HCT116 (cell line): ENCODE measurements at regions of chr17 and their contacts with region 1.

Region 1: GRCh38 chr17:49997791-49998703 is 3.0 kb upstream of the DLX3 start:
- DNase-seq: peak; percentile 88
- ATAC-seq: peak; percentile 86
- H3K4me3 ChIP-seq: no peak overlapping the region
- H3K27ac ChIP-seq: no peak overlapping the region; the same call in 1 of the 2 replicates
- H3K4me1 ChIP-seq: peaks cover 14 to 30% of the 10 kb centered on the region in 2 experiments
- H3K27me3 ChIP-seq: peaks cover 6% of the 10 kb centered on the region; the same call in 1 of the 2 replicates
- CTCF ChIP-seq: peak; percentile 94 to 99 (median 97)
- POLR2A ChIP-seq: no peak
- RAD21 ChIP-seq: peak; percentile 100

Region 2: GRCh38 chr17:49567871-49568694 is 430.0 kb before region 1 on chr17:
- CTCF ChIA-PET with region 1: interaction called, 86 read pairs
- POLR2A ChIA-PET with region 1: interaction called, 4 read pairs
- RAD21 ChIA-PET with region 1: interaction called, 5 to 6 read pairs
- intact Hi-C with region 1: loop called (anchors 1 kb)
- DNase-seq: peak; percentile 81
- ATAC-seq: peak; percentile 74
- H3K4me3 ChIP-seq: 0 out of 4 replicates have a peak overlapping the region, but pooled peaks of 1 of the 2 experiments have one; percentile 2
- H3K27ac ChIP-seq: no peak overlapping the region
- H3K4me1 ChIP-seq: peaks cover 0 to 17% of the 10 kb centered on the region in 2 experiments; a peak in 3 of 4 replicates
- H3K27me3 ChIP-seq: peaks cover 5% of the 10 kb centered on the region; the same call in 1 of the 2 replicates
- CTCF ChIP-seq: peak; percentile 98 to 99 (median 99)
- POLR2A ChIP-seq: no peak
- RAD21 ChIP-seq: peak; percentile 100

Region 3: DNA sequence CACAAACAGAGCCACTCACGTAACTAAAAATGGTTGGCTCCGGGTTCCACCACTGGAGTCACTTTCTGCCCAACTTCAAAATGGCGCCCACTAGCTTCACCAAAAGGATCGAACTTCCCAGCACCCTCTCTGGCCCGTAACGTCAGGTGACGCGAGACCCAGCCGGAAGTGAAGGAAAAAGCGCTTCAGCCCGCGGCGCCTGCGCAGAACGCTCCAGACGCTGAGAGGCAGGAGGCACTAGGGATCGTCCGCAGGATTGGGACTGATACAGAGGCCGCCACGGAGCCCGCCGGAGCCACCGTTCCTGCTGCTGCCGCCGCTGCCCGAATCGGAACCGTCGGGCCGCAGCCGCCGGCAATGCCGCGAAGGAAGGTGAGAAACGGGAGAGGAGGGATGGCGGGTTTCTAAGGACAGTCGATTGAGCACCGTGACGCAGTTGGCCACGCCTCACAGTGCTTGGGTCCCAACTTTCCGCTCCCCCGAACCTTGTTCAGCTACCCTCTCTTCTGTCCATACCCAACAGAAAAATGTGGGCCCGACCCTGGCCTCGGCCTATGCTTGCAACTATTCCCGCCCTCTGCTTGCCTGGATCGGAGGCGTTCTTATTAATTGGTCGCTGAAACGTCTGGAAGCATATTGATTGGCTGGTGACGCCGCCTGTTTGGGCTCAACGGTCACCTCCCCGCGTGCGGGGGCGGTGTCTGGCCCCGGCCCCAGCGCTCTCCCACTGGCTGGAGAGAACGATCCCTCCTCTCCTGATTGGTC is 209.4 kb before region 1 on chr17 and contains the start of gene KAT7:
- CTCF ChIA-PET with region 1: interaction called, 6 read pairs
- POLR2A ChIA-PET with region 1: interaction called, 4 read pairs
- RAD21 ChIA-PET with region 1: no interaction called
- intact Hi-C with region 1: loop called (anchors 2 kb)
- DNase-seq: peak; percentile 100
- ATAC-seq: peak; percentile 93
- H3K4me3 ChIP-seq: peak within 1 kb of the TSS; percentile 86 to 96
- H3K27ac ChIP-seq: peak within 1 kb of the TSS; percentile 98
- H3K4me1 ChIP-seq: peaks cover 13 to 19% of the 10 kb centered on the region in 2 experiments
- H3K27me3 ChIP-seq: no peaks in the 10 kb centered on the region; the same call in 1 of the 2 replicates
- CTCF ChIP-seq: no peak
- POLR2A ChIP-seq: peak; percentile 82
- RAD21 ChIP-seq: no peak
- total RNA-seq, gene KAT7: 79.5 TPM

Region 4: GRCh38 chr17:49880291-49881053 is 117.6 kb before region 1 on chr17:
- CTCF ChIA-PET with region 1: interaction called, 123 read pairs
- POLR2A ChIA-PET with region 1: no interaction called
- RAD21 ChIA-PET with region 1: interaction called, 10 to 11 read pairs
- intact Hi-C with region 1: loop called (anchors 1 kb)
- DNase-seq: peak; percentile 70
- ATAC-seq: peak; percentile 98
- H3K4me3 ChIP-seq: peak overlapping the region; percentile 39 to 52
- H3K27ac ChIP-seq: no peak overlapping the region; the same call in 1 of the 2 replicates
- H3K4me1 ChIP-seq: peaks cover 5 to 13% of the 10 kb centered on the region in 2 experiments; a peak in 3 of 4 replicates
- H3K27me3 ChIP-seq: no peaks in the 10 kb centered on the region
- CTCF ChIP-seq: peak; percentile 92 to 99 (median 99)
- POLR2A ChIP-seq: no peak
- RAD21 ChIP-seq: peak; percentile 99

Region 5: GRCh38 chr17:49952209-49952911 is 45.7 kb before region 1 on chr17:
- CTCF ChIA-PET with region 1: interaction called, 53 read pairs
- POLR2A ChIA-PET with region 1: interaction called, 5 read pairs
- RAD21 ChIA-PET with region 1: interaction called, 24 to 27 read pairs
- intact Hi-C with region 1: loop called (anchors 1 kb)
- DNase-seq: peak; percentile 76
- ATAC-seq: peak; percentile 97
- H3K4me3 ChIP-seq: no peak overlapping the region
- H3K27ac ChIP-seq: no peak overlapping the region
- H3K4me1 ChIP-seq: peaks cover 20 to 29% of the 10 kb centered on the region in 2 experiments
- H3K27me3 ChIP-seq: no peaks in the 10 kb centered on the region; the same call in 1 of the 2 replicates
- CTCF ChIP-seq: peak; percentile 92 to 100 (median 100)
- POLR2A ChIP-seq: no peak
- RAD21 ChIP-seq: peak; percentile 96

Region 6: GRCh38 chr17:50055426-50056230 is 57.6 kb after region 1 on chr17 and contains the start of gene ITGA3:
- CTCF ChIA-PET with region 1: interaction called, 20 read pairs
- POLR2A ChIA-PET with region 1: interaction called, 15 read pairs
- RAD21 ChIA-PET with region 1: interaction called in 1 of 2 experiments, 3 read pairs
- intact Hi-C with region 1: no loop called
- DNase-seq: peak; percentile 98
- ATAC-seq: peak; percentile 61
- H3K4me3 ChIP-seq: peak within 1 kb of the TSS; percentile 82 to 88
- H3K27ac ChIP-seq: peak within 1 kb of the TSS; percentile 93
- H3K4me1 ChIP-seq: peaks cover 76 to 86% of the 10 kb centered on the region in 2 experiments
- H3K27me3 ChIP-seq: no peaks in the 10 kb centered on the region
- CTCF ChIP-seq: no peak
- POLR2A ChIP-seq: no peak
- RAD21 ChIP-seq: no peak
- total RNA-seq, gene ITGA3: 392 TPM

Region 7: GRCh38 chr17:50094753-50095619 is 96.9 kb after region 1 on chr17 and contains the start of gene PDK2:
- CTCF ChIA-PET with region 1: interaction called, 32 read pairs
- POLR2A ChIA-PET with region 1: no interaction called
- RAD21 ChIA-PET with region 1: interaction called, 4 to 5 read pairs
- intact Hi-C with region 1: no loop called
- DNase-seq: peak; percentile 96
- ATAC-seq: peak; percentile 92
- H3K4me3 ChIP-seq: peak within 1 kb of the TSS; percentile 84 to 96
- H3K27ac ChIP-seq: peak within 1 kb of the TSS; percentile 64
- H3K4me1 ChIP-seq: peaks cover 14 to 37% of the 10 kb centered on the region in 2 experiments
- H3K27me3 ChIP-seq: no peaks in the 10 kb centered on the region
- CTCF ChIP-seq: no peak
- POLR2A ChIP-seq: no peak
- RAD21 ChIP-seq: no peak
- total RNA-seq, gene PDK2: 39.1 TPM